ENCODE measurements at regions of chr20 and their contacts with region 1.

Region 1: GRCh38 chr20:59087829-59088433 is 45.3 kb upstream of the PRELID3B start:
- DNase-seq: peak; percentile 89
- ATAC-seq: peak; percentile 74

Region 2: DNA sequence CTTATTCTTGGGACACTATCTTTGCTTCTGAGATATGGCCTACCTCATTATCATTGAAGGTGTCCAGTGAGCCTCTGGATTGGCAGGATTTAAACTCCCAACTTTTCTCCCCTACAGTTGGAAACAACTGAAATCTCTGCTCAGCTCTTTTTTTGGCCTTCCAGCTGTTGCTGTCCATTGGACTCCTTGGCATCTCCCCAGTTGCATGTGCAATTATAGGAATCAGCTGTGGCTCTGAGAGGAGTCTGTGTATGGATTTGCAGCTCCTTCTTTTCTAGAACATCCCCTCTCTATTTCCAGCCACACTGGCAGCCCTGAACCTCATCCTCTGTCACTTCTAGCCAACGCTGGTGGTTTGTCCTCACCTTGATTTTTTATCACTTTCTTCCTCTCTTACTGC is 757.2 kb before region 1 on chr20:
- intact Hi-C with region 1: no loop called
- DNase-seq: no peak
- ATAC-seq: peak; percentile 35

Region 3: DNA sequence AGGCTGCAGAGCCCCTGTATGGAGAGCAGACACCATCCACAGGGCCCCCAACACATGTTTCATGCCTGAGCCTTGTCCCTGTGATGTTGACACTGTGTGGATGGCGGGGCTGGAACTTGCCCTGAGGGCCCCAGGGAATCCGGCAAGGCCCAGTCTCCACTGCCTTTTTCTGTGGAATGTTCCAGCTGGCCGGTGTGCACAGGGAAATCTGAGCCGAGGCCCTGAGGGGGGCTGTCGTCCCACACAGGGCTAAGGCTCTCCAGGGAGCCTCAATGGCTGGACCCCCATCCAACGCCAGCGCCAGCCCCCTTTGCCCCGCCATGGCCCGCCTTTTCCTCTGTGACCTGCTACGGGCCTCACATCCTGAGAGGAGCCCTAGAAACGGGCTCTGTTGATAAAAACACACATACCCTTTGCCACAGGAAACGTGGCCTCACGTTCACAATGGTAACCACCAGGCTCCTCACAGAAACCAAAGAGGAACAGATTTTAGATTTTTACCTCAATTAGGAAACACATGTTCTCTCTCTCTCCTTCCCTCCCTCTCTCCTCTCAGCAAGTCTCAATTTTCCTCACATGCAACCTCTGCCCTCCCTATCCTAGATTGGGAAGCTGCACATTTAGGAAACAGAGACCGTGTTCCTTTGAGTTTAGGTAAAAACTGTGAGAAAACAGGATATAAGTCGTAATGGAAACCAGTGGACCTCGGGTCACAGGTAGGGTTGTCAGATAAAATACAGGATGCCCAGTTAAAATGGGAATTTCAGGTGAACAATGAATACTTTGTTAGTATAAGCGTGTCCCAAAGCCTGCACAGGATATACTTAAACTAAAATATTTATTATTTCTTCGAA is 61.9 kb after region 1 on chr20:
- intact Hi-C with region 1: loop called (anchors 10 kb)
- DNase-seq: peak; percentile 66
- ATAC-seq: no peak

Region 4: DNA sequence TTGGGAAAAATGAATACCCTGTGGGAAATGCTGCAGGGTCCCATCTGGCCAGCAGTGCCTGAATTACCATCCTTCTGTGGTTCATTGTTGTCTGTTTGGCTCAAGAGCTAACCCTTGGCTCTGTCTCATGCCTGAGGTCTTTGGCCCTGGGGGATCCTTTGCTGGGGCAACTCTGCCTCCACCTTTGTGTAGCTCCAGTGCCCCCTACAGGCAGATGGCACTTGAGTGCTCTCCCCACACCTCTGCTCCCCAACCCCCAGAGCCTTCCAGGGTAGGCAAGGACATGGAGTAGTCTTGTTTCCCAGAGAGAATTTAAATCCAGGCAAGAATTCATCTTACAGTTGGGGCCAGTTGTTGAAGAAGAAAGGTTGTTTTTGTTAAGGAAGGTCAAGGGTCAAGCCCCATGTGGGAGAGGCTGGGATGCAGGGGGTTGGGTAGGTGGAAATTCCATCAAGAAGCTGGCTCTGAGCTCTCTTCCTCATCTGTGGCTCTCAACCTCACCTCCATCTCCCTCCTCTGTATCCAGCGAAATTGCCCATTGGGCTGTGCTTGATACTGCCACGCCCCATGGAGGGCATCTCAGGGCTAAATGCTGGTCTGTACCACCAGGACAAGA is 119.9 kb after region 1 on chr20:
- intact Hi-C with region 1: loop called (anchors 1 kb)
- DNase-seq: peak; percentile 75
- ATAC-seq: peak; percentile 70

Region 5: GRCh38 chr20:59222253-59223181 is 134.6 kb after region 1 on chr20:
- intact Hi-C with region 1: loop called (anchors 1 kb)
- DNase-seq: peak; percentile 89
- ATAC-seq: peak; percentile 88

Region 6: GRCh38 chr20:59284470-59284869 is 196.5 kb after region 1 on chr20:
- intact Hi-C with region 1: no loop called
- DNase-seq: no peak
- ATAC-seq: no peak

Region 7: GRCh38 chr20:59403261-59403961 is 315.5 kb after region 1 on chr20:
- intact Hi-C with region 1: loop called (anchors 10 kb)
- DNase-seq: no peak
- ATAC-seq: no peak

Measured in Right ventricle myocardium inferior (tissue), 1 donor.